Activated naive CD4-positive, alpha-beta T cell treated with anti-CD3 and anti-CD28 coated beads for 36 hours (primary cell): ENCODE measurements at regions of chr5 and their contacts with region 1.

Region 1: GRCh38 chr5:96702503-96703383 is 40.6 kb downstream of the CAST start:
- DNase-seq: peak; percentile 89
- H3K4me3 Mint-ChIP-seq: peak overlapping the region; percentile 87
- H3K27ac Mint-ChIP-seq: peak overlapping the region; percentile 88
- H3K4me1 Mint-ChIP-seq: peaks cover 47% of the 10 kb centered on the region
- H3K27me3 Mint-ChIP-seq: no peaks in the 10 kb centered on the region

Region 2: DNA sequence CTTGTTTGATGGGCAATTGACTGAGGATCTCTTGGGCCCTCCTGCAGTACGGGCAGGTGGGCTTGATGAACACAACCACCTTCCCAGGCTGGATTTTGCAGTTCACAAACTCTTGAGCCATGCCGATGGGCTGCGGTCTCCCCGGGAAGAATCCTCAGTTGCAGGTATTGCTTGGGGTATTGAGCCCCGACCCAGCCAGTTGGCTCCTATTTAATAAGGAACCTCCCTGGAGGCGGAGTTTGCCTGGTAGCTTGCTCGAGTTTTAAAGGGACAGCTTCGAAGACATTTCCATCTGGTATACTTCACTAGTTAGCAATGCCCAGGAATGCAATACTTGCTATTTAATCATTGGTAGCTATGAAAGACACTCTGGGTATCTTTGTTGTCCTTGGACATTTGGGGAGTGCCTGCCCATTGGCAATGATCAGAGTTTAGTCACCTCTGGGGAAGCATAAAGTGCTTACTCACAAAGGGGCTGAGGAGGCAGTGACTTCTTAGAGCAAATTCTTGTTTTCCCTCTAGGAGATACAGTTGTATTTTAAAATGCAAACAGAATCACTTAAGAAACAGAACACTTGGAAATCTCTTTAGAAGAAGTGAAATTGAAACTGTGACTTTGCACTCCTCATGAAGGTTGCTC is 880.1 kb before region 1 on chr5 and contains the start of gene GLRX:
- CTCF ChIA-PET with region 1: no interaction called
- intact Hi-C with region 1: loop called (anchors 5 kb)
- DNase-seq: peak; percentile 64
- H3K4me3 Mint-ChIP-seq: peak within 1 kb of the TSS; percentile 96
- H3K27ac Mint-ChIP-seq: peak within 1 kb of the TSS; percentile 98
- H3K4me1 Mint-ChIP-seq: peaks cover 61% of the 10 kb centered on the region
- H3K27me3 Mint-ChIP-seq: no peaks in the 10 kb centered on the region
- total RNA-seq, gene GLRX: 50.4 to 51.1 TPM

Region 3: GRCh38 chr5:96344678-96345577 is 357.8 kb before region 1 on chr5:
- CTCF ChIA-PET with region 1: interaction called, 5 read pairs
- intact Hi-C with region 1: loop called (anchors 2 kb)
- DNase-seq: peak; percentile 27
- H3K4me3 Mint-ChIP-seq: no peak overlapping the region
- H3K27ac Mint-ChIP-seq: no peak overlapping the region
- H3K4me1 Mint-ChIP-seq: peaks cover 25% of the 10 kb centered on the region
- H3K27me3 Mint-ChIP-seq: peaks cover 4% of the 10 kb centered on the region

Region 4: GRCh38 chr5:96714951-96715451 is 12.3 kb after region 1 on chr5:
- CTCF ChIA-PET with region 1: interaction called, 4 read pairs
- intact Hi-C with region 1: loop called (anchors 1 kb)
- DNase-seq: peak; percentile 48
- H3K4me3 Mint-ChIP-seq: no peak overlapping the region
- H3K27ac Mint-ChIP-seq: no peak overlapping the region
- H3K4me1 Mint-ChIP-seq: peaks cover 20% of the 10 kb centered on the region
- H3K27me3 Mint-ChIP-seq: no peaks in the 10 kb centered on the region

Region 5: DNA sequence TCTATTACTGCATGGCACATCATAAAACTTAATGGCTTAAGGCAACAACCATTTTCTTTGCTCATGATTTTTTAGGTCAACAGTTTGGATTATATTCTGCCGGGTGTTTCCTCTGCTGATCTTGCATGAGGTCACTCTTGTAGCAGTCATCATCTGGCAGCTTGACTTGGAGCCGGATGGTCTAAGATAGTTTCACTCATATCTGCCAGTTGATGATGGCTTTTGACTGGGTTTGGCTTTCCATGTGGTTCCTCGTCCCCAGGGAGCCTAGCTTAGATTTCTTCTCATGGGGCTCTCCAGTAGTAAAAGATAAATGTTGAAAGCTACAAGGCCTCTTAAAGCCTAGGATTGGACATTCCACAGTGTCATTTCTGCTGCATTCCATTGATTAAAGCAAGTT is 260.5 kb after region 1 on chr5:
- CTCF ChIA-PET with region 1: no interaction called
- intact Hi-C with region 1: loop called (anchors 5 kb)
- DNase-seq: peak; percentile 47
- H3K4me3 Mint-ChIP-seq: peak overlapping the region; percentile 69
- H3K27ac Mint-ChIP-seq: peak overlapping the region; percentile 95
- H3K4me1 Mint-ChIP-seq: peaks cover 73% of the 10 kb centered on the region
- H3K27me3 Mint-ChIP-seq: no peaks in the 10 kb centered on the region

Region 6: DNA sequence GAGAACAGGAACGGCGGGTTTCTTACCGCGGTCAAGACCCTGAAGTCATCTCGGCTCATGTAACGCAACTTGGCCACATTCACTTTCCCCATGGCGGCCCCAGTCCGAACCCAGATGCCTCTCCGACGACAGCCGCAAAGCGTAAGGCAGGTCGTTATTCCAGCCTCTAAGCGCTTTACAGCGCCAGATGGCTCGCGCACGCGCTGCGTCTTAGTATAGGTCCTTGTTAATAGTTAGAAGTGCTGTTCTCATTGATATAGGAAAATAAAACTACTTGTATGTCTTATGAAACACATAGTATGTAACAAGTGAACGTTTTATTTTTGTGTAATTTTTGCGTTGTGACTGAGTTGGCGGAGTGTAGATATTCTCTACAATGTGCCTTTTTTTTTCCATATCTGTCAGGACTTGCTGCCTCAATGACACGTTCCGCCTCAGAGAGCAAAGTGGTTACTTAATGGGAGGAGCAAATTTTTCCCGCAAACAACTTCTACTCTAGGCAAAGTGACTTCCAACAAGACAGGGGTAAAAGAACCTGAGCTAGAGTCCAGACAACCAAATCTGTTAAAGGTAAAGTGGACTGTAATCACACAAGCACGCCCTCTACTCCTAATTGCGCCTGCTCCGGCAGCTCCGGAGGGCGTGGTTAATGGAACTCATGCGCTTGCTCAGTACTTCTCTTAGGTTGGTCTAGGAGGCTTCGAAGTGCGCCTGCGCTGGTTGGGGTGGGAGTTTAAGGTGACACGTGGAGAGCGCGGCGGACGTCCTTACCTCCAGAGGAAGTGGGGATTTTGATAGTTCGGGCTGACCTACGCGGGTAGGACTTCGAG is 480.6 kb after region 1 on chr5 and contains the start of gene RIOK2:
- CTCF ChIA-PET with region 1: no interaction called
- intact Hi-C with region 1: loop called (anchors 1 kb)
- DNase-seq: peak; percentile 97
- H3K4me3 Mint-ChIP-seq: peak within 1 kb of the TSS; percentile 93
- H3K27ac Mint-ChIP-seq: peak within 1 kb of the TSS; percentile 99
- H3K4me1 Mint-ChIP-seq: peaks cover 33% of the 10 kb centered on the region
- H3K27me3 Mint-ChIP-seq: no peaks in the 10 kb centered on the region
- total RNA-seq, gene RIOK2: 29.1 to 32.0 TPM